ENCODE measurements at regions of chr2 and their contacts with region 1.

Region 1: DNA sequence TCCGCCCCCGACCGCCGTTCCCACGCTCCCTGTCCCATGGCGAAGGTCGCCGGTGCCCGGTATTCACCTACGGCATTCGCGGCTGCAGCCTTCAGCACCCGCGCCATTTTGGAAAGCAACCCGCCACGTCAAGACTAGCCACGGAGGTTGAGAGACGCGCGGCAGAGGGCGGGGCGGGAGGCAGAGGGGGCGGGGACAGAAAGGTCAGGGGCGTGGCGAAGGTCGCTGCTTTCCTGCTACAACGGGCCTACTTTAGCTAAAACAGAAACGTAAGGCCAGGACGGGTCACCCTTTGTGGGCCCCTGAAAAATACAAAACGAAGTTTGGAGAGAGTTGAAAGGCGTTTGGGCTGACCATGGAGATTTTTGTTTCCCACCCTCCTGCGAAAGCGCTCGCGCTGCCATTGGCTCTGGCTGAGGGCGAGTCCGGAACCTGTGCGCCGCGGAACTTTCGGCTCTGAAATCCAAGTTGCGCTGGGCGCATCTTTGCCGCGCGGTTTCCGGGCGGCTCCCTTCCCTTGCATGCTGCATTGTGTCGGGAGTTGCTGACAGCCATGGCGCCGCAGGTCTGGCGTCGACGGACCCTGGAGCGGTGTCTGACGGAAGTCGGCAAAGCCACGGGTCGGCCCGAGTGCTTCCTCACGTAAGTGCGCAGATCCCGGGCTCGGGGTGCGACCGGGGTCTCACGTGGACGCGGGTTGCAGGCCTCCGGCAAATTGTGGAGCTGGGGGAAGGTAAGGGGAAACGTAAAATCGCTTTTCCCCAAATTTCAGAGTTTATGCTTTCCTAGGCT is at the starts of genes MCEE and MPHOSPH10:
- DNase-seq: peak; percentile 90
- ATAC-seq: peak; percentile 96
- H3K4me3 ChIP-seq: peak within 1 kb of the TSS; percentile 78
- H3K27ac ChIP-seq: peak within 1 kb of the TSS; percentile 84
- H3K4me1 ChIP-seq: peaks cover 3% of the 10 kb centered on the region; the same call in 1 of the 2 replicates
- H3K27me3 ChIP-seq: no peaks in the 10 kb centered on the region
- CTCF ChIP-seq: no peak
- POLR2A ChIP-seq: peak; percentile 70
- RAD21 ChIP-seq: no peak
- total RNA-seq, gene MCEE: 11.1 and 13.9 TPM in 2 replicates
- total RNA-seq, gene MPHOSPH10: 5.4 and 15.6 TPM in 2 replicates

Region 2: DNA sequence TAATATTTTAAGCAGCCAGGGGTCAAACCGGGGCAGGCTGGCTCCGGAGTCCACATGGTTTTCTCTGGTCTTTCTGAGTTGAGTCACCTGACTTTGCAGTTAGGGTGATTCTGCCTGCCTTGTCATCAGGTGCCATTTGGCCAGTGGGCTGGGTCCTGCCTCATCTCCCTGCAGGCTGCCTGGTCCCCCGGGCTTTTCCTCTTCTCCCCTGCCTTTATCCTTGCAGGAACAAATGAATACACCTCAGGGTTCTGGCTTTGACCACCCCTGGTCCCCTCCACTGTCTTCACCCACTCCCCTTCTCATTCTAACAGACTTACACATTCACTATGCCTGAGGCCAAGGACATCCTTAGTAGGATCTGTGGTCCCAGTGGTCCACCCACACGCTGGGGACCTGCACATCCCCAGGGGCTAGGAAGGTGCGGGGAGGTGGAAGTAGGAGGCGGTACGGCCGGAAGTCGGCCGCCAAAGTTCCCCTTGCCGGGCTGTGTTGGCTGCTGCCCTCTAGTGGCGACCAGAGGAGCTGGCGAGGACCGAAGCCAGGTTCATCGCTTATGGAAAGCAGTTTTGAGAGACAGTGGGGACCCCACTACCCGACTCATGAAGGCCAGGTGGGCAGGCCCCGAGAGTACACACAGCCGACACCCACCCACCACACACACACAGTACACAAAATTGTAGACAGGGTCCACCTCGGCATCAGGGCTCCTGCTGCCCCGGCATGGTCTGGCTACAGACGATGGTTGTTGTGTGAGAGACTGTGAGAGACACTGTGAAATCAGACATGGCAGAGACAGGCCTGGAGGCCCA is 129.3 kb before region 1 on chr2:
- CTCF ChIA-PET with region 1: no interaction called
- POLR2A ChIA-PET with region 1: no interaction called
- dilution Hi-C with region 1: no loop called
- in situ Hi-C with region 1: no loop called
- intact Hi-C with region 1: loop called (anchors 10 kb)
- DNase-seq: peak; percentile 60
- ATAC-seq: peak; percentile 96
- H3K4me3 ChIP-seq: peak overlapping the region; percentile 46
- H3K27ac ChIP-seq: no peak overlapping the region
- H3K4me1 ChIP-seq: peaks cover 2% of the 10 kb centered on the region; the same call in 1 of the 2 replicates
- H3K27me3 ChIP-seq: peaks cover 5% of the 10 kb centered on the region; the same call in 1 of the 2 replicates
- CTCF ChIP-seq: peak; percentile 80
- POLR2A ChIP-seq: no peak
- RAD21 ChIP-seq: peak; percentile 54

Region 3: DNA sequence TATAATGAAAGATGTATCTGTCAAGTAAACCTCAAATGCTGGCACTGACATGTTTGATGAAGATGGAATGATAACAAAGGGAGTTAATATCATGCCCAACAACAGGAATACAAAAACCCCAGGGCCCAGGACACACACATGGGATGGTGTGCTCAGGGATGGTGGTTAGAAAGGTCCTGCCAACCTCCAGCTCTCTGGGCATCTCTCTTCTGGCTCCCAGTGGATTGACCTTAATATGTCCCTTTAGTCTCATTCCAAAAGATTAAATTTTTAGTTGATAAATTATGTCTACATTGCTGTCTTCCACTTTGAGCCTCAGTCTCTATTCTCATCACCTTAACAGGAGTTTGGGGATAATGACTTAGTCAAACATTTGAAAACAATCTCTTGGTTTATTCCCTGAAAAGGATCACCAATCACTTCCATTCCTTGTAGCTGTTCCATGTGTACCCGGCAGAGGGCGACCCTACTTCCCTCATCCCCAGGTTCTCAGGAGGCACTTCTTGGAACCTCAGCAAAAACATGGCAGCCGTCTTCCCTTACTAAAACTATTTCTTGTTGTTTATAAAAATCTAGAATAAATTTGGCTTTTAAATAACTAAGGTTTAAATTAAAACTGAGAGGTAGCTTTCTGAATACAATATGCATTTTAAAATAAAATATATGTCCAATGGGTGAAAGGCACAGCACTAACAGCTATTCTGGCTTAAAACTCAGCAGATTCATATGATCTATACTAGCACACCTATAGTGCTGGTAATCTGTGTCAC is 29.9 kb before region 1 on chr2:
- CTCF ChIA-PET with region 1: no interaction called
- POLR2A ChIA-PET with region 1: no interaction called
- dilution Hi-C with region 1: no loop called
- in situ Hi-C with region 1: no loop called
- intact Hi-C with region 1: loop called (anchors 1 kb)
- DNase-seq: peak; percentile 70
- ATAC-seq: peak; percentile 83
- H3K4me3 ChIP-seq: no peak overlapping the region
- H3K27ac ChIP-seq: no peak overlapping the region
- H3K4me1 ChIP-seq: no peaks in the 10 kb centered on the region
- H3K27me3 ChIP-seq: no peaks in the 10 kb centered on the region; the same call in 1 of the 2 replicates
- CTCF ChIP-seq: peak; percentile 69
- POLR2A ChIP-seq: no peak
- RAD21 ChIP-seq: peak; percentile 62

Measured in IMR-90 (cell line).